Tibial artery (tissue), 4 donors: ENCODE measurements at regions of chr5 and their contacts with region 1.

Region 1: GRCh38 chr5:64229163-64229774 is 63.6 kb downstream of the RNF180 start:
- DNase-seq: no peak
- H3K4me3 ChIP-seq: no peak overlapping the region
- H3K27ac ChIP-seq: no peak overlapping the region
- H3K4me1 ChIP-seq: no peaks in the 10 kb centered on the region
- H3K27me3 ChIP-seq: no peaks in the 10 kb centered on the region
- CTCF ChIP-seq: peak; percentile 59 to 63

Region 2: DNA sequence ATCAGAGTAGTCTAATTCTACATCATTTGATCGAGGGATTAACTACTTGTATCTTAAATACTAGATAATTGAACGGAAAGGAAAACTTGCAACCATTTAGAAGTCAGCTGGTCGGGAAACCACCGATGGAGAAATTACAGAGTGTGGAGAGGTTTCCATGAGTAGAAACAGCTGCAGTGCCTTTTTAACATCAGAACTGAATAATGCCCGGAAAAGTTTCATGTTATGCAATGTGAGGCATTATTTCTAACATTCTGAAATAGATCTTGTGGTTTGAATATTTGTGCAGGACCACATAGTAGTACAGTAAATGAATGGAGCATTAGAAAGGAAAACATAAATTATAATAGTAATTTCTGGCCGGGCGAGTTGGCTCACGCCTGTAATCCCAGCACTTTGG is 151.7 kb before region 1 on chr5:
- intact Hi-C with region 1: loop called (anchors 10 kb)
- DNase-seq: no peak
- H3K4me3 ChIP-seq: no peak overlapping the region
- H3K27ac ChIP-seq: no peak overlapping the region
- H3K4me1 ChIP-seq: no peaks in the 10 kb centered on the region
- H3K27me3 ChIP-seq: no peaks in the 10 kb centered on the region
- CTCF ChIP-seq: no peak

Region 3: DNA sequence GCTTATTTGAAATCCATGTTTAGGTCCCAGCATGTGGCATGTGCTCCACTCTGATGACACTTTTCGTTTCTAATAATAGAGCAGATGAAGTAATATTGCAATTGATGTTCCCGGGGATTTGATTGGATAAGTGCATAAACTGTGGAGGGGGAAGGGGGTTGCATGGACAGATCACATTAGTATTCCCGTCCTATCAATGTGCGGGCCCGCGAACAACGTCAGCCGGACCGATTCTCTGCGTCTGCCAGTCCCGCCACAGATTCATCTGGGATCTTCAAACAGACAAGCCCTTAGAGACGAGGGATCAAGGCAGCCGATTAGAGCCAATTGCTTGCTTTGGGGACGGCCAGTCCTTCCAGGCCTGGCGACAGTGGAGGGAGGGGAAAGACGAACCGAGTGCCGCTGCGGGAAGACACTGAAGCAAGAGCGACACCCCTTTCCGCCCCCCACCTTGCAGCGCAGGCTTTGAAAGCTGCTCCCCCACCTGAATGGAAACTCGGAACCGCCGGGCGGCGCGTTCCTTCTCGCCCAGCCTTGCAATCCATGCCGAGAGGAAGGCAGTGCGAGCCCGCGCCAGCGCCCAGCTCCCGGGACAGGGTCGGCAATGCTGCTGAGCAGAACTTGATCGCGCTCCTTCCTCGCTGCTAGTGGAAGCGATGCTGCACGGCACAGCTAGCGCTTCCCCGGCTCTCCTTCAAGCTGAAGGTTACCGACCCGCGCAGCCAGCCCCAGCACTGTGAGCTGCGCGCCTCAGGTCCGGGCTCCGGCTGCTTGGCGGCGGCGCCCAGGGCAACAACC is 276.7 kb after region 1 on chr5 and contains the start of gene RGS7BP:
- intact Hi-C with region 1: loop called (anchors 10 kb)
- DNase-seq: peak in 1 of 2 donors; percentile 72
- H3K4me3 ChIP-seq: peak within 1 kb of the TSS; percentile 64 to 65
- H3K27ac ChIP-seq: peak within 1 kb of the TSS; percentile 53 to 68
- H3K4me1 ChIP-seq: peaks cover 0 to 53% (median 14%) of the 10 kb centered on the region in 4 donors
- H3K27me3 ChIP-seq: no peaks in the 10 kb centered on the region
- CTCF ChIP-seq: peak; percentile 44 to 52

Region 4: GRCh38 chr5:64612344-64612961 is 383.2 kb after region 1 on chr5:
- intact Hi-C with region 1: loop called (anchors 5 kb)
- DNase-seq: peak in 1 of 2 donors; percentile 40
- H3K4me3 ChIP-seq: no peak overlapping the region
- H3K27ac ChIP-seq: no peak overlapping the region
- H3K4me1 ChIP-seq: peaks cover 0 to 4% (median 0%) of the 10 kb centered on the region in 4 donors
- H3K27me3 ChIP-seq: no peaks in the 10 kb centered on the region
- CTCF ChIP-seq: peak; percentile 71 to 81